Right ventricle myocardium inferior (tissue), 1 donor: ENCODE measurements at regions of chr4 and their contacts with region 1.

Region 1: GRCh38 chr4:5780831-5781480 is 70.0 kb downstream of the EVC start:
- DNase-seq: no peak
- ATAC-seq: no peak

Region 2: DNA sequence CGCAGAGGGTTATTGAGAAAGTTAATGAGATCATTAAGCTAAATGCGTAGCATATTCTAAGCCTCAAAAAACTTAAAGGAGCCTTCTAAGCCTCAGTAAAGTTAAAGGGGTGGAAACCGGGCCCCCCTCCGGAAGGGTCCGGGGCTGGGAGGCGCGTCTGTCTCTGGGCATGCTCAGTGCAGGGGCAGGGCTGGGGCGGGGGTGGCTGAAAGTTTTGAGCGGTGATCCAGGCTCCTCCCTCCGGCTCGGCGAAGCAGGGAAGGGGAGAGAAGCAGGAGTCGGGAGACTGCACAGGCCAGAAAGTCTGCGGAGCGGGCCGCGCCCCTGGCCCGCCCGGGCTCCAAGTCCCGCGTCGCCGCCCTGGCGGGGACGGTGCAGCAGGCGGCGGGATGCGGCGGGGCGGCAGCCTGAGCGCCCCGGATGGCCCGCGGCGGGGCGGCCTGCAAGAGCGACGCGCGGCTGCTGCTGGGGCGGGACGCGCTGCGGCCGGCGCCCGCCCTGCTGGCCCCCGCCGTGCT is 69.9 kb before region 1 on chr4 and contains the start of gene EVC:
- intact Hi-C with region 1: loop called (anchors 5 kb)
- DNase-seq: peak; percentile 86
- ATAC-seq: peak; percentile 92
- total RNA-seq, gene EVC: 6.7 TPM

Region 3: GRCh38 chr4:5730993-5731990 is 49.7 kb before region 1 on chr4:
- intact Hi-C with region 1: no loop called
- DNase-seq: no peak
- ATAC-seq: no peak